ENCODE measurements at regions of chr18 and their contacts with region 1.

Region 1: DNA sequence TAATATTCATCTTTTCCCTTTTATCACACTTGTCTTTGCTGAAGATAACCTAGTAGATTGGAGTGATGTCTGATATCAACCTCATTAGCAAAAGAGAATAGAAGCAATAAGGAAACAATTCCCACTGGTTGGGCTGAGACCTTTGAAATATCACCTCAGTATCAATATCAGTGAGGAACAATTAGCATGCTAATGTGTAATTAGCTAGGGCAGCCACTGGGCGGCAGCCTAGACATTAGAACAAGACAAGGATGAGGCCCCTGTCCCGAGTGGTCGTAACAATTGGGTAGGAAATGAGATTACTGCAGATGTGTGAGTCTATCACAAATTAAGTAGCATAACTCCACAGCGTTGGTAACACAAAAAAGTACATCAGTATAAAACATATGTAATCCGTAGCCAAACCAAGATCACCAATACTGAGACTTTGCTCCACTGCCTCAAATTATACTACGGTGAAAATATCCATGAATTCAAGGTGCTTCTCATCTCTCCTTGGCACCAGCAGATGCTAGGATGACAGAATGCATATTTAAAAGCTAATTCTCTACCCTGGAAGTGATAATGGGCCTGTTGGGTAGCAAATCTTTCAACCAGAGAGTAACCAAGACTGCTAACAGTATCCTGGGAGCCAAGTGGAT is 99.1 kb downstream of the ALPK2 start:
- DNase-seq: no peak
- H3K4me3 ChIP-seq: no peak overlapping the region
- H3K27ac ChIP-seq: no peak overlapping the region
- H3K4me1 ChIP-seq: peaks cover 0 to 11% (median 7%) of the 10 kb centered on the region in 4 donors
- H3K27me3 ChIP-seq: no peaks in the 10 kb centered on the region
- CTCF ChIP-seq: peak; percentile 52 to 75 (median 69)
- EP300 ChIP-seq: no peak
- POLR2A ChIP-seq: no peak

Region 2: DNA sequence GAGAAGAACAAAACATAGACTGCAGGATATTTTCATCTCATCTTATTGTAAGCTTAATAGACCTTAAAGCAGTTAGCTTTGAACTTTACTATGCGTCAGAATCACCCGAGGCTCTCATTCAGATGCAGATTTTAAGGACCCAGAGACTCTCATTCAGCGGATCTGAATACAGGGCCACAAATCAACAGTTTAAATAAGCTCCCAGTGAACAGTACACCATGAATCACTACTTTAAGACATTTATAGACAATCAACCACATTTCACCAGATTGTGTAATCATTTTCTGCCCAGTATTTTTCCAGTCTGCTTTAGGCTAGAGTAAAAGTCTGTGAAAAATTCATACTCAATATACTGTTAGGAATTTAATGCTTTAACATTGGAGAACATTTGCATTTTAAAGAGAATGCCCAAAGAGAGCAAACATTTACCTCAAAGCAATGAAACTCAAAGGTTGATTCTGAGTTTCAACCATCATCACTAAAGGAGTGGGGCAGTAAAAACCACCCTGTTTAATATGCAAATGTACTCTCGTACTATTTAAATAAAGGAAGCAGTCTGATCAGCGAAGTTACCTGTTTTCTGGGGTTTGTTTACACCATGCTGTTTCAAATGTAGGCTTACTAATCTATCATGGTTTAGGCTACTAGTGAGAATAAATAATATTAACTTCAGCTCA is 110.1 kb after region 1 on chr18:
- intact Hi-C with region 1: no loop called
- DNase-seq: no peak
- H3K4me3 ChIP-seq: no peak overlapping the region
- H3K27ac ChIP-seq: no peak overlapping the region
- H3K4me1 ChIP-seq: peaks cover 0 to 6% (median 0%) of the 10 kb centered on the region in 4 donors
- H3K27me3 ChIP-seq: no peaks in the 10 kb centered on the region
- CTCF ChIP-seq: no peak
- EP300 ChIP-seq: no peak
- POLR2A ChIP-seq: no peak

Region 3: DNA sequence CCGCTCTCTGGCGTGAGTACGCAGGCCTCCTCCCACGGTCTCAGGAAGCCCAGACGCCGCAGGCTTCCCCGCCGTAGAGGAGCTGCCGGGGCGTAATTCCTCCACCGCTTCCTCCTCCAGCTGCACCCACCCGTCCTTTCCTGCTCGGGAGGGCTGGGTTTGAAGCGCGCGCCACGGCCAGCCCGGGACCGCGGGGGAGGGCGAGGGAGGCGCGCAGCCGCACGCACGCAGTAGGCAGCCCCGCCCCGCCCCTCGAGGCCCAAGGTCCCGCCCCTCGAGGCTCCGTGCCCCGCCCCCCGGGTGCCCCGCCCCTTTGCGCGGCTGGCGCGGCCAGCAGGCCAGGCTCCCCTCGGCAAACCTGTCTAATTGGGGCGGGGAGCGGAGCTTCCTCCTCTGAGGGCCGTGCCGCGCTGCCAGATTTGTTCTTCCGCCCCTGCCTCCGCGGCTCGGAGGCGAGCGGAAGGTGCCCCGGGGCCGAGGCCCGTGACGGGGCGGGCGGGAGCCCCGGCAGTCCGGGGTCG is 141.3 kb after region 1 on chr18 and contains the start of gene MALT1:
- intact Hi-C with region 1: loop called (anchors 5 kb)
- DNase-seq: peak; percentile 97
- H3K4me3 ChIP-seq: peak within 1 kb of the TSS; percentile 86 to 96 (median 92)
- H3K27ac ChIP-seq: peak within 1 kb of the TSS; percentile 96 to 97 (median 96)
- H3K4me1 ChIP-seq: peaks cover 14 to 22% (median 16%) of the 10 kb centered on the region in 4 donors
- H3K27me3 ChIP-seq: no peaks in the 10 kb centered on the region
- CTCF ChIP-seq: no peak
- EP300 ChIP-seq: no peak
- POLR2A ChIP-seq: peak; percentile 71
- total RNA-seq, gene MALT1: 18.3 to 27.5 (median 22.6) TPM

Region 4: DNA sequence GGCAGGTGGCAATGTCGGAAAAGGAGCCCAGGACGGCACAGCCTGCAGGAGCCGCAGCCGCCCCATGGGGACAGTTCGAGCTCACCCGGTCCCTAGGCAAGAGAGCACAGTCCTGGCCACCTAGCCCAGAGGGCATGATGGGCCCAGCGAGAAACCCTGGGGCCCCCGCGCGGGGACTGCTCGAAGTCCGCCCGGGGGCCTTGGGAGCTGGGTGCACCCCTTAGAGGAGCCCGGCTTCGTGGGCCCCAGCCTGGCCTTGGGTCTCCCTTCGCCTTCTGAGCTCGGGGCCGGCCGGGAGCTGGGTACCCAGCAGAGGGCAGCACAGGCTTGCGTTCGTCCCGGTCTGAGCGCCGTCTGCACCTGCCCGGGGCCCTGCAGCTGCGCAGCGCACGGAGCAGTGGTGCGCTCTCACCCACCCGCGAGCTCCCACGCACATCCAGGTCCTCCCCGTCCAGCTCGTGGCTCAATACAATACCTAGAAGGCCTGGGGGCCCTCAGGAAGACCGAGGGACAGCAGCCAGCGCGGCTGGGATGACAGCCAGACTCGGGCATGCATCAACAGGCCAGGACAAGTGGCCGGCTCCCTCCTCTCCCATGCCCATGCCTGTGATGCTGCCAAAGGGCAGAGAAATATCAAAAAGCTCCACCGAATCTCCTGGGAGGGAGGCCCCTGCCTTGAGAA is 238.6 kb after region 1 on chr18:
- intact Hi-C with region 1: loop called (anchors 2 kb)
- DNase-seq: no peak
- H3K4me3 ChIP-seq: peak overlapping the region; percentile 38 to 53 (median 40)
- H3K27ac ChIP-seq: no peak overlapping the region
- H3K4me1 ChIP-seq: peaks cover 10 to 24% (median 19%) of the 10 kb centered on the region in 4 donors
- H3K27me3 ChIP-seq: peaks cover 0 to 19% (median 3%) of the 10 kb centered on the region in 4 donors
- CTCF ChIP-seq: peak; percentile 57 to 87 (median 79)
- EP300 ChIP-seq: no peak
- POLR2A ChIP-seq: no peak

Measured in esophagus muscularis mucosa (tissue), 4 donors.